Colonic mucosa (tissue), 4 donors: ENCODE measurements at regions of chr4 and their contacts with region 1.

Region 1: DNA sequence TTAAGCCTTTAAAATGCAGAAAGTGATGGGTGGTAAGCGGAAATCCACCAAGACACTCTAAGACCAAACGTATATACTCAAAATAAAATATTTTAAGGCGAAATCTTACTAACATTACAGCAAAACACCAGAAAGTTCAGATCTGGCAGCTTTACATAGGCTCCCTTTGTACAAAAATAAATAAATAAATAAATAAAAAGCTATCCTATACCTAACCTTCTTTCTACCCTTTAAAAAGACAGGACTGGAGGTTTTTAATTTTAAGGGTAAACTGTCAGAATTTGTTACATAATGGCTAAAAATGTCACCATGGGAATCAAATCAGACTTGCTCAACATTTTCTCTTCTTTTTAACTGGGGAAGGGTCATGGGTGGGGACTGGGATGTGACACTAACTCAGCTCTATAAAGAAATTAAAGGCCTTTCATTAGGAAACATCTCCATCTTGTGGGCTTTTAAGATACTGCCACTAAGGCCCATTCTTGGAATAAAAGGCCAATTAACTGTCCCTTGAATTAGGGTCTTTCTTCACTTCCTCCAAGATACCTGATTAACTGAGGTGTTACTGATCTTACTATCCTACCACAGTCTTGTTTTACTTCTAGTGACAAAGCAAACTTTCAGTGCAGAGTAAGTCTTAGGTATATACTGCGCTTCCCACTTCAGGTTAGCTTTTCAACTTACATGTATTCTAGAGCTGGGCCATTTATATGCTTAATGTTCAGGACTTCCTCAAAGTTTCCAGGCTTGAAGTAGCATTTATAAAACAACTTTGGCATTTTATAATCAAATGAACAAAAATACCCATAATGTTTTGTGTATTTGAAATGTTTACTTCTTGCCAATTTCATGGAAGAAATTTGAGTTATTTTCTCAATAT is 13.3 kb downstream of the HNRNPD start:
- DNase-seq: no peak
- H3K4me3 ChIP-seq: no peak overlapping the region
- H3K27ac ChIP-seq: no peak overlapping the region
- H3K4me1 ChIP-seq: peaks cover 11% of the 10 kb centered on the region
- H3K27me3 ChIP-seq: no peaks in the 10 kb centered on the region
- CTCF ChIP-seq: peak; percentile 52

Region 2: DNA sequence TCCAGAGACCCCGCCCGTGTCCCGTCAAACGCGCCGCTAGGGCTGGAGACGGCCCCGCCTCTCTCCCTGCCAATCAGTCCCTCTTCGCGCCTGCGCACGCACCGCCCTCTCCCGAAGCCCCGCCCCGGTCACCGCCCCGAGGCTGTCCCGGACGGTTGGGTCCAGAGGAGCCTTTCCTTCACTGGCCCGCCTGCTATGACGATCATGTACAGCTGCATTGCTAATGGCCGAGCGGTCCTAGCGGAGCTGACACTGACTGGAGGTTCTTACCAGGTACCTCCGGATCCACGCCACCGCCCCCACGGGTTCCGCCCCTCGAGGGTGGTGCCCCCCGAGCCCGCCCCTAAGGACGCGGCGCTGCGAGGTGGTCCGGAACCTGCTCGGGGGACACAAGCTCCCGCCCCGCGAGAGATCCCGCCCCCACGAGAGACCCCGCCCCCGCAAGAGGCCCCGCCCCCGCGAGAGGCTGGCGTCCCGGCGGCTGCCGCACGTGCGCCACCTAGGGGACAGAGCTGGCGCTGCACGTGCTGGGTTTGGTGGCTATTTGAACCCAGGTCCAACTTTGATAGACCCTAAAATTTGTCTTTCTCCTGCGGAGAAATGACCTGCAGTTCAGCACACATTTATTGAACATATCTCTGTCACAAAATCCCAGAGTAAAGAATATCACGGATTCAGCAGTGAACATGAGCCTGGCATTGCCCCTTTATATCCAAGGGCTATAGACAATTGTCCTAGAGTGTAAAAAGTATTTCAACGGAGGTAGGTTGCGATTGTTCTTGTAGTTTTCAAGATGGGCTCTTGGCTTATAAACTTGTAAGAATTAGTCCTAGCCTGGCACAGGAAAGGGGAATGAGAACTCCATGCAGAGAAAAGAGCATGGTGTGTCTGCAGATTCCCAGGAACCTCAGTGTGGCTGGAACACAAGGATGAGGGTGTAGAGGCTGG is 75.4 kb before region 1 on chr4:
- intact Hi-C with region 1: loop called (anchors 10 kb)
- DNase-seq: peak; percentile 99
- H3K4me3 ChIP-seq: peak overlapping the region; percentile 23
- H3K27ac ChIP-seq: no peak overlapping the region
- H3K4me1 ChIP-seq: no peaks in the 10 kb centered on the region
- H3K27me3 ChIP-seq: no peaks in the 10 kb centered on the region
- CTCF ChIP-seq: peak; percentile 94

Region 3: GRCh38 chr4:82774711-82775171 is 414.2 kb after region 1 on chr4:
- intact Hi-C with region 1: no loop called
- DNase-seq: no peak
- H3K4me3 ChIP-seq: no peak overlapping the region
- H3K27ac ChIP-seq: no peak overlapping the region
- H3K4me1 ChIP-seq: no peaks in the 10 kb centered on the region
- H3K27me3 ChIP-seq: no peaks in the 10 kb centered on the region
- CTCF ChIP-seq: no peak

Region 4: GRCh38 chr4:83054928-83055327 is 694.4 kb after region 1 on chr4:
- intact Hi-C with region 1: no loop called
- DNase-seq: no peak
- H3K4me3 ChIP-seq: no peak overlapping the region
- H3K27ac ChIP-seq: no peak overlapping the region
- H3K4me1 ChIP-seq: no peaks in the 10 kb centered on the region
- H3K27me3 ChIP-seq: no peaks in the 10 kb centered on the region
- CTCF ChIP-seq: peak; percentile 32